ENCODE measurements at regions of chr2 and their contacts with region 1.

Region 1: GRCh38 chr2:190880378-190881073 is at the start of gene GLS:
- DNase-seq: peak; percentile 89 to 98 (median 96)
- ATAC-seq: peak; percentile 74 to 75
- H3K4me3 Mint-ChIP-seq: peak within 1 kb of the TSS; percentile 93 to 100 (median 99)
- H3K27ac Mint-ChIP-seq: peak within 1 kb of the TSS; percentile 95 to 100 (median 98)
- H3K4me1 Mint-ChIP-seq: peaks cover 25 to 63% (median 55%) of the 10 kb centered on the region in 4 donors
- H3K27me3 Mint-ChIP-seq: no peaks in the 10 kb centered on the region
- polyA plus RNA-seq, gene GLS: 30.0 to 55.9 (median 40.8) TPM

Region 2: DNA sequence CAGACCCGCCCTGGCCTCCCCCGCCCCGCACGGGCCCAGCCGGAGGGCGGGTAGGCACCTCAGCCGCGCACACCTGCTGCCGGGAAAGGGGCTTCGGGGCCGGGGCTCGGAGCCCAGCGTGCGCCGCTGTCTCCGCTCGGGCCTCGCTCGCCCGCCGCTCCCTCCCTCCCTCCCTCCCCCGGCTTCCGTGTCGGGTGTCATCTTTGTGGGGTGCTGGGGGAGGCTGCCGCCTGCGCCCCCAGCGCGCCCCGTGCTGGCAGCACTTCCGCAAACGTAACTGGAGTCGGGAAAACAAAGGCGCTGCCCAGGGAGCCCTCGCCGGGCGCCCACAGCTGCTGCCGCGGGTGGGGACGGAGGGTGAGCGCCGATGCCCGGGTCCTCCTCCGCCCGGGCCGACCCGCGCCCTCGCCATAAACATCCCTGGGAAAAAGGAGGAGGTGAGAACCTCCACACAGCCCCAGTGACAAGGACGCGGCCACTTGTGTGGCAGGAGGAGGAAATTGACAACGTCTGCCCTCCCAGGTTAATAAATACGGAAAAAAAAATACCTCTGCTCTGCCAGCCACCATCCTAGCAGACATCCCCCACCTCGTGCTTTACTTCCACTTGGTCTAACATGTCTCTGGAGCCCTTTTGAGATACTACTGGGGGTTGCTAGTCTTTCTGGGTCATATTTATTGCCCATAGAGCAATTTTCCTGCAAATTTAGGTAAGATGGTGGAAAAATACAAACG is 471.8 kb before region 1 on chr2:
- POLR2A ChIA-PET with region 1: interaction called, 13 read pairs
- DNase-seq: peak; percentile 70 to 92 (median 82)
- ATAC-seq: peak; percentile 39 to 53
- H3K4me3 Mint-ChIP-seq: peak overlapping the region; percentile 83 to 97 (median 92)
- H3K27ac Mint-ChIP-seq: peak overlapping the region; percentile 94 to 100 (median 99)
- H3K4me1 Mint-ChIP-seq: peaks cover 24 to 49% (median 45%) of the 10 kb centered on the region in 4 donors
- H3K27me3 Mint-ChIP-seq: no peaks in the 10 kb centered on the region

Region 3: DNA sequence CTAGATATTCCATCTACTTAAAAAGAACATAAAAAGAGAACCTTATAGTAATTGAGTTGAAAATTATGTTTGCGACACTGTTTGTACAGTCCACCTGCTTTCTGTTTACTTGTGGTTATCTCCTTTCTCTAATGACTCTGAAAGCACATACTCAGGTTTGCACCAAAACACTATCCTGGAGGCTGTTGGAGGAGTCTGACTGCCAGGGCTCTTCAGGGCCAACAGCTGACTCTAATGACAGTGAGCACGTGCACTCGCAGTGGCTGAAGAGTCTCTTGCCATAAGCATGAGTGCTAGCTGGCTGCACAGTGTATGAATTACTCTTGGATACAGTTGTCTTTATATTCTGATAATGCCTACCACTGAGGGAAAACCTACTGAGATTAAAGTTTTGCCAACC is 16.6 kb before region 1 on chr2:
- POLR2A ChIA-PET with region 1: interaction called, 25 read pairs
- DNase-seq: no peak
- ATAC-seq: peak; percentile 30 to 44
- H3K4me3 Mint-ChIP-seq: peak overlapping the region in 4 of 10 donors; percentile 7 to 45 (median 14)
- H3K27ac Mint-ChIP-seq: peak overlapping the region in 8 of 10 donors; percentile 11 to 89 (median 70)
- H3K4me1 Mint-ChIP-seq: peaks cover 8 to 21% (median 20%) of the 10 kb centered on the region in 4 donors
- H3K27me3 Mint-ChIP-seq: no peaks in the 10 kb centered on the region

Region 4: DNA sequence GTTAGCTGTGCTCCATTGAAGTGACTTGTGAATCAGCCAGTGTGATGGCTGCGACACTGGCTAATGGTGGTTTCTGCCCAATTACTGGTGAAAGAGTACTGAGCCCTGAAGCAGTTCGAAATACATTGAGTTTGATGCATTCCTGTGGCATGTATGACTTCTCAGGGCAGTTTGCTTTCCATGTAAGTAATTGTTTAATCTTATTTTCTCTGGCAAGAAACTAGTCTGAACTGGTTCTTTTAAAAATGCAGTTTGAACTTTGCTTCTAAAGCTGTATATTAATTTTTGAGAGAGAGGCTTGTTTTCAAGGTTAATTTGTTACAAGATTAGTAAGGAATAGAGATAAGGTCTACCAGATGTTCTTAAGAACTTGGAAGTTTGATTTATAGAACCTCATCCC is 46.8 kb after region 1 on chr2:
- POLR2A ChIA-PET with region 1: interaction called, 10 read pairs
- DNase-seq: no peak
- ATAC-seq: no peak
- H3K4me3 Mint-ChIP-seq: no peak overlapping the region
- H3K27ac Mint-ChIP-seq: peak overlapping the region in 5 of 10 donors; percentile 31 to 69 (median 63)
- H3K4me1 Mint-ChIP-seq: peaks cover 0 to 9% (median 8%) of the 10 kb centered on the region in 4 donors
- H3K27me3 Mint-ChIP-seq: no peaks in the 10 kb centered on the region

Region 5: GRCh38 chr2:191013932-191014652 is 133.6 kb after region 1 on chr2 and contains the start of gene STAT1:
- POLR2A ChIA-PET with region 1: interaction called, 22 read pairs
- DNase-seq: peak; percentile 93 to 98 (median 97)
- ATAC-seq: peak; percentile 87
- H3K4me3 Mint-ChIP-seq: no peak within 1 kb of the TSS
- H3K27ac Mint-ChIP-seq: no peak within 1 kb of the TSS
- H3K4me1 Mint-ChIP-seq: peaks cover 15 to 47% (median 28%) of the 10 kb centered on the region in 4 donors
- H3K27me3 Mint-ChIP-seq: no peaks in the 10 kb centered on the region
- polyA plus RNA-seq, gene STAT1: 154 to 231 (median 217) TPM

Region 6: GRCh38 chr2:191150600-191151330 is 270.2 kb after region 1 on chr2 and contains the start of gene STAT4:
- POLR2A ChIA-PET with region 1: interaction called, 14 read pairs
- DNase-seq: peak; percentile 60 to 93 (median 88)
- ATAC-seq: peak; percentile 83 to 86
- H3K4me3 Mint-ChIP-seq: peak within 1 kb of the TSS; percentile 62 to 98 (median 96)
- H3K27ac Mint-ChIP-seq: peak within 1 kb of the TSS; percentile 90 to 99 (median 98)
- H3K4me1 Mint-ChIP-seq: peaks cover 15 to 64% (median 54%) of the 10 kb centered on the region in 4 donors
- H3K27me3 Mint-ChIP-seq: no peaks in the 10 kb centered on the region
- polyA plus RNA-seq, gene STAT4: 63.2 to 75.8 (median 73.7) TPM